Naive thymus-derived CD8-positive, alpha-beta T cell (primary cell): ENCODE measurements at regions of chr14 and their contacts with region 1.

Region 1: DNA sequence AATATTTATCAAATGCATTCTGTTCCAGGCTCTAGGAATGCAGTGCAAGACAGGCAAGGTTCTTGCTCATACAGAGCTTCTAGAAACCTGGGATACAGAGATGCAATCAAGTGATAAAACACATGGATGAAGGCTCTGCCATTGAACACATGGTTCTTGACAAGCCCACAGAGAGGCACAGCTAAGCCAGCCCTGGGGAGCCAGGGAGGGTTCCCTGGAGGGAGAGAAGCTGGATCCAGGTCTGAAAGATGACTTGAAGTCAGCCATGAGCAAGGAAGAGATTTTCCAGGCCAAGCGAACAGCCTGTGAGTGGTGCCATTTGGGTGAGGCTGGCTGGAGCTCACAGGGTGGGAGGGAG is 66.2 kb downstream of the IRF2BPL start:
- DNase-seq: no peak
- ATAC-seq: no peak
- H3K4me3 Mint-ChIP-seq: peak overlapping the region; percentile 76 to 90 (median 83)
- H3K27ac Mint-ChIP-seq: peak overlapping the region; percentile 89 to 98 (median 95)
- H3K4me1 Mint-ChIP-seq: peaks cover 33 to 83% (median 82%) of the 10 kb centered on the region in 4 donors
- H3K27me3 Mint-ChIP-seq: no peaks in the 10 kb centered on the region

Region 2: GRCh38 chr14:76882651-76883050 is 79.6 kb before region 1 on chr14:
- POLR2A ChIA-PET with region 1: no interaction called
- DNase-seq: no peak
- ATAC-seq: no peak
- H3K4me3 Mint-ChIP-seq: no peak overlapping the region
- H3K27ac Mint-ChIP-seq: no peak overlapping the region
- H3K4me1 Mint-ChIP-seq: peaks cover 2 to 9% (median 8%) of the 10 kb centered on the region in 4 donors
- H3K27me3 Mint-ChIP-seq: no peaks in the 10 kb centered on the region

Region 3: GRCh38 chr14:76918751-76919543 is 43.3 kb before region 1 on chr14:
- POLR2A ChIA-PET with region 1: interaction called, 13 read pairs
- DNase-seq: no peak
- ATAC-seq: no peak
- H3K4me3 Mint-ChIP-seq: peak overlapping the region in 4 of 10 donors; percentile 36 to 52 (median 48)
- H3K27ac Mint-ChIP-seq: peak overlapping the region in 1 of 10 donors; percentile 35
- H3K4me1 Mint-ChIP-seq: peaks cover 7 to 54% (median 46%) of the 10 kb centered on the region in 4 donors
- H3K27me3 Mint-ChIP-seq: no peaks in the 10 kb centered on the region

Region 4: GRCh38 chr14:76926521-76927251 is 35.6 kb before region 1 on chr14:
- POLR2A ChIA-PET with region 1: interaction called, 22 read pairs
- DNase-seq: peak; percentile 34 to 84 (median 70)
- ATAC-seq: peak; percentile 60 to 68
- H3K4me3 Mint-ChIP-seq: peak overlapping the region; percentile 63 to 85 (median 80)
- H3K27ac Mint-ChIP-seq: peak overlapping the region; percentile 68 to 96 (median 82)
- H3K4me1 Mint-ChIP-seq: peaks cover 36 to 87% (median 80%) of the 10 kb centered on the region in 4 donors
- H3K27me3 Mint-ChIP-seq: no peaks in the 10 kb centered on the region

Region 5: GRCh38 chr14:76947078-76947837 is 15.0 kb before region 1 on chr14:
- POLR2A ChIA-PET with region 1: interaction called, 18 read pairs
- DNase-seq: peak; percentile 56 to 87 (median 66)
- ATAC-seq: peak; percentile 97 to 99
- H3K4me3 Mint-ChIP-seq: peak overlapping the region in 7 of 10 donors; percentile 28 to 71 (median 50)
- H3K27ac Mint-ChIP-seq: peak overlapping the region in 7 of 10 donors; percentile 19 to 92 (median 77)
- H3K4me1 Mint-ChIP-seq: peaks cover 8 to 33% (median 23%) of the 10 kb centered on the region in 4 donors
- H3K27me3 Mint-ChIP-seq: no peaks in the 10 kb centered on the region

Region 6: GRCh38 chr14:77033622-77034521 is 71.6 kb after region 1 on chr14:
- POLR2A ChIA-PET with region 1: interaction called, 86 read pairs
- DNase-seq: peak; percentile 44 to 79 (median 65)
- ATAC-seq: peak; percentile 38 to 57
- H3K4me3 Mint-ChIP-seq: peak overlapping the region; percentile 87 to 97 (median 90)
- H3K27ac Mint-ChIP-seq: peak overlapping the region; percentile 92 to 98 (median 96)
- H3K4me1 Mint-ChIP-seq: peaks cover 56 to 88% (median 80%) of the 10 kb centered on the region in 4 donors
- H3K27me3 Mint-ChIP-seq: no peaks in the 10 kb centered on the region

Region 7: GRCh38 chr14:77040059-77040740 is 77.9 kb after region 1 on chr14:
- POLR2A ChIA-PET with region 1: interaction called, 33 read pairs
- DNase-seq: peak; percentile 96 to 100 (median 98)
- ATAC-seq: peak; percentile 79 to 85
- H3K4me3 Mint-ChIP-seq: peak overlapping the region; percentile 79 to 93 (median 88)
- H3K27ac Mint-ChIP-seq: peak overlapping the region; percentile 94 to 100 (median 99)
- H3K4me1 Mint-ChIP-seq: peaks cover 49 to 96% (median 87%) of the 10 kb centered on the region in 4 donors
- H3K27me3 Mint-ChIP-seq: no peaks in the 10 kb centered on the region